Activated CD4-positive, alpha-beta memory T cell treated with anti-CD3 and anti-CD28 coated beads for 36 hours (primary cell): ENCODE measurements at regions of chr10 and their contacts with region 1.

Region 1: GRCh38 chr10:9175200-9175599 is 1120.7 kb downstream of the GATA3 start:
- DNase-seq: no peak
- H3K4me3 Mint-ChIP-seq: no peak overlapping the region
- H3K27ac Mint-ChIP-seq: no peak overlapping the region
- H3K4me1 Mint-ChIP-seq: peaks cover 13% of the 10 kb centered on the region
- H3K27me3 Mint-ChIP-seq: peaks cover 18% of the 10 kb centered on the region

Region 2: DNA sequence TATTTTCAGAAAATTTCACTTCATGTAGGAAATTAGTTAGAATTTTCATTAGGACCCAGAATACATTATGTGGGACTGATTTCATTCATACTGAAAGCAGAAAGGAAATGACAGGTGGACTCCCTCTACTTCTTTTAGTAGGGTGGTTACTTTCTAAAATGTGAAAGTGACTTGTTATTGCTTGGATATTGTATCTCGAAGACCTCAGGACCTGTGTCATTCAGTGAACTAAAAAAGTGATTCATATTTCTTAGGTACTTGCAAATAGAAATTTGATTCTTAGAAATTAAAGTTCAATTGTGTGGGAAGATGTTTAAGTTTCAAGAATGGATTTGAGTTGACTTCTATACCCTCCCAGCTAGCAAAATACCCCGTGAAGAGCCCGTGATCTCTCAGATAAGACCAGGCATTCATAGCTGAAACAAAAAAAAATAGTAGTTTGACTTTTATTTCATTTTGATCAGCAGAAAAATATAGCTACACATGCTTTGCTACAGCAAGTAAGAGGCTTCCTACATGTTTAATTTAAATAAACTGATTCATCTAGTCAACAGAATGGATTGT is 83.6 kb before region 1 on chr10:
- CTCF ChIA-PET with region 1: no interaction called
- POLR2A ChIA-PET with region 1: no interaction called
- intact Hi-C with region 1: loop called (anchors 1 kb)
- DNase-seq: peak; percentile 48
- H3K4me3 Mint-ChIP-seq: no peak overlapping the region
- H3K27ac Mint-ChIP-seq: peak overlapping the region; percentile 30
- H3K4me1 Mint-ChIP-seq: peaks cover 24% of the 10 kb centered on the region
- H3K27me3 Mint-ChIP-seq: no peaks in the 10 kb centered on the region